Dorsolateral prefrontal cortex (tissue), 120 donors: ENCODE measurements at regions of chr15 and their contacts with region 1.

Region 1: GRCh38 chr15:101439285-101439919 is 50.1 kb downstream of the PCSK6 start:
- DNase-seq: peak in 1 of 10 donors; percentile 22
- H3K4me3 ChIP-seq: peak overlapping the region in 6 of 59 donors; percentile 1 to 50 (median 18)
- H3K27ac ChIP-seq: peak overlapping the region in 51 of 59 donors; percentile 3 to 92 (median 71)
- H3K27me3 ChIP-seq: peaks cover 0 to 5% (median 0%) of the 10 kb centered on the region in 45 donors
- CTCF ChIP-seq: peak in 1 of 56 donors; percentile 29

Region 2: DNA sequence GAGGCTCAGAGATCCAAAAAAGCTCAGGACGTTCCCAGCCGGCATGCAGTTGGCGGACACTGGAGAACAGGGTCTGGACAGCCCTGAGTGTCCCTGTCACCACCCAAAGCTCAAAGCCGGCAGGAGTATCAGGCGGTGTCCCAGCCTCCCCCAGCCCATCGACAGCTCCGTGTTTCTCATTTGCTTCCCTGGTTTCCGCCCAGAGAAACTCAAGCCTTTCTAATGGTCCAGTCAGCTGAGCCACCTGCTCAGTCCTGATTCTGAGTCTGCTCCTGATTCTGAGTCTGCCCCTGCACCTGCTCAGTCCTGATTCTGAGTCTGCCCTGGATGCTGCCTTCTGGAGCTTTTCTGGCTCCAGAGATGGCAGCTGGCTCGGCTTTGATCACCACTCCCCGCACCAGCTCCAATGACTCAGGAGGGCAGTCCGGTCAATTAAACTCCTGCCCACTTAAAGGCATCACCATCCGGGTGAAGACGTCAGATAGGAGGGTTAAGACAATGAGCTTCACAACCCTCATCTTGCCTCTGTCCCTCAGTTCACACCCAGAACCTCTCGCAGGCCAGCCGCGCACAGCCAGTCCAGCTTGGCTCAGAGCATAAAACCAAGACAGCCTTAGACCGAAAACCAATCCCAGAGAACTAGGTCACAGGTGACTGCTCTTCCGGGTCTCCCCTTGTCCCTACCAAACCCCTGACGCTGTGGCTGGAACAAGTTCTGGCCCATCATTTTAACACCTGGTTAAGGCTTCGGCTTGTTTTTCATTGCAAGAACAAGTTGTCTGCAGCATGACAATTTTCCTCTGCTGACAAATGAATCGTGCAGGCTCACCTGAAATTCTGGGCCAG is 43.3 kb after region 1 on chr15:
- intact Hi-C with region 1: loop called in 1 of 2 experiments (anchors 5 kb)
- DNase-seq: no peak
- H3K4me3 ChIP-seq: peak overlapping the region in 1 of 59 donors; percentile 18
- H3K27ac ChIP-seq: peak overlapping the region in 56 of 59 donors; percentile 4 to 99 (median 90)
- H3K27me3 ChIP-seq: peaks cover 0 to 5% (median 0%) of the 10 kb centered on the region in 45 donors
- CTCF ChIP-seq: no peak